PC-9 (cell line): ENCODE measurements at regions of chr7 and their contacts with region 1.

Region 1: DNA sequence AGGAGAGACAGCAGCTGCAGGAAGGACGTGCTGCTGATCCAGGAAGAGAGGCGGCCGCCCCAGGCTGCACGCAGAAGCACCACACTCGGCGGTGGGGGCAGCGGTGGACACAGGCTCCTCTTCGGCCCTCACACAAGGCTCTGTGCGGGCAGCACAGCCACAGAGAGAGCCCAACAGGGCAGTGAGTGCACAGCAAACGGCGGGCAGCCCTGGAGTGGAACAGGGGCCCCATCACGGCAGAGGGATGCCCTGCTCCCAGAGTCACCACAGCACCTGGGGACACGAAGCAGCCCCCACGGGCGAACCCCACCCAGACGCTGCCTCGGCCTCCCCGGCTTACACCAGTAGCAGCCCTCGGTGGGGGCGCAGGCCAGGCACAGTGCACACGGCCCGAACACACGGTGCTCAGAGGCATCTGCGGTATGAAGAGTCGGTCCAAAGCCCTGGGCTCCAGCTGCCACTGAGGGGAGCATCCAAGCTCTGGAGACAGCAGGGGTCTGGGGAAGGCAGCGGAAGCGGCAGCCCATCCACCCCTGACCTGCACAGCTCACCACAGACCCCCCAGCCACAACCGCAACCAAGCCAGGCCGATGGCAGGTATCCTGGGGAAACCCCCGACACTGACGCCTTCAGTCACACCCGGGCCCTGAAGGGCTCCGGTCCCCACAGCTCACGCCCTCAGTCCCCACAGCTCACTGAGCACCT is 16.8 kb downstream of the NUDT1 start:
- DNase-seq: no peak
- H3K4me3 ChIP-seq: no peak overlapping the region
- H3K27ac ChIP-seq: no peak overlapping the region
- H3K4me1 ChIP-seq: peaks cover 54% of the 10 kb centered on the region
- H3K27me3 ChIP-seq: no peaks in the 10 kb centered on the region
- CTCF ChIP-seq: no peak

Region 2: GRCh38 chr7:2009541-2010001 is 249.2 kb before region 1 on chr7:
- CTCF ChIA-PET with region 1: no interaction called
- POLR2A ChIA-PET with region 1: no interaction called
- intact Hi-C with region 1: no loop called
- DNase-seq: no peak
- H3K4me3 ChIP-seq: no peak overlapping the region
- H3K27ac ChIP-seq: no peak overlapping the region
- H3K4me1 ChIP-seq: no peaks in the 10 kb centered on the region
- H3K27me3 ChIP-seq: no peaks in the 10 kb centered on the region
- CTCF ChIP-seq: no peak

Region 3: GRCh38 chr7:2203766-2204300 is 55.0 kb before region 1 on chr7:
- CTCF ChIA-PET with region 1: no interaction called
- POLR2A ChIA-PET with region 1: no interaction called
- intact Hi-C with region 1: no loop called
- DNase-seq: no peak
- H3K4me3 ChIP-seq: no peak overlapping the region
- H3K27ac ChIP-seq: no peak overlapping the region
- H3K4me1 ChIP-seq: no peaks in the 10 kb centered on the region
- H3K27me3 ChIP-seq: no peaks in the 10 kb centered on the region
- CTCF ChIP-seq: no peak

Region 4: GRCh38 chr7:2279896-2280295 is 21.1 kb after region 1 on chr7:
- CTCF ChIA-PET with region 1: no interaction called
- POLR2A ChIA-PET with region 1: no interaction called
- intact Hi-C with region 1: loop called (anchors 1 kb)
- DNase-seq: no peak
- H3K4me3 ChIP-seq: no peak overlapping the region
- H3K27ac ChIP-seq: no peak overlapping the region
- H3K4me1 ChIP-seq: no peaks in the 10 kb centered on the region
- H3K27me3 ChIP-seq: no peaks in the 10 kb centered on the region
- CTCF ChIP-seq: no peak